ENCODE measurements at regions of chr5 and their contacts with region 1.

Region 1: GRCh38 chr5:152560512-152561137 is 155.5 kb upstream of the NMUR2 start:
- DNase-seq: peak; percentile 31 to 70
- H3K4me3 ChIP-seq: no peak overlapping the region
- H3K27ac ChIP-seq: no peak overlapping the region
- H3K4me1 ChIP-seq: peaks cover 0 to 27% (median 2%) of the 10 kb centered on the region in 4 donors
- H3K27me3 ChIP-seq: no peaks in the 10 kb centered on the region
- CTCF ChIP-seq: peak; percentile 73 to 84

Region 2: GRCh38 chr5:152542741-152543140 is 17.9 kb before region 1 on chr5:
- intact Hi-C with region 1: no loop called
- DNase-seq: no peak
- H3K4me3 ChIP-seq: no peak overlapping the region
- H3K27ac ChIP-seq: no peak overlapping the region
- H3K4me1 ChIP-seq: no peaks in the 10 kb centered on the region
- H3K27me3 ChIP-seq: no peaks in the 10 kb centered on the region
- CTCF ChIP-seq: no peak

Region 3: DNA sequence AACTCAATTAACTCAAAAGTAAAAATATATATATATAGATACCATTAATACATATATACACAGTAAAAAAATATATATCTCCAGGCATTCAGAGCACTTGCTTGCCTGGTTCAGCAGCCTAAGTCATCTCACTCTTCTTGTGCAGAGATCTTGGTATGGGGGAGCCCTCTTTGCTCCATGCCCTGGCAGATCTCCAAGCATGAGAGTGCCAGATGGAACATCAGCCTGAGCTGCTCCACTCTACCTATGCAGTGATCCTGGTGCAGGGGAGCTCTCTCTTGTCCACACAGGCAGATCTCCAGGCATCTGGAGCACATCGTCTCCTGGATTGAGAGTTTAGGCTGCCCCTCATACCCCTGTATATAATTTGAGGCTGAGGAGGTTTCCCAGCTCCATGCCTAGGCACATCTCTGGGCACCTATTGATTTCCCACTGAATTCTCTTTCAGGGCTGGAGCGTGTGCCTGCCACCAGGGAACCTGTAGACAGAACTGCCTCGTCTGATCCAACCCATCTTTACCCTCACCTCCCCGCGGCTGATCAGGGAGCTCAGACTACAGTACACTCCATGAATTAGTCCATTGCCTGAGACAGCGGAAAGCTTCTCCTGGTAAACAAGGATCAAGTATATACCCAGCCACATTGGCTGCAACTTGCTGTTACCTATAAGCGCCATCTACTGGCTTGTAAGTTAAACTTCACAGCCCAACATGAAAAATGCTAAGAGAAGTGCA is 587.4 kb after region 1 on chr5:
- intact Hi-C with region 1: loop called (anchors 10 kb)
- DNase-seq: no peak
- H3K4me3 ChIP-seq: no peak overlapping the region
- H3K27ac ChIP-seq: no peak overlapping the region
- H3K4me1 ChIP-seq: no peaks in the 10 kb centered on the region
- H3K27me3 ChIP-seq: no peaks in the 10 kb centered on the region
- CTCF ChIP-seq: peak; percentile 57 to 58